H1 (cell line): ENCODE measurements at regions of chr7 and their contacts with region 1.

Region 1: DNA sequence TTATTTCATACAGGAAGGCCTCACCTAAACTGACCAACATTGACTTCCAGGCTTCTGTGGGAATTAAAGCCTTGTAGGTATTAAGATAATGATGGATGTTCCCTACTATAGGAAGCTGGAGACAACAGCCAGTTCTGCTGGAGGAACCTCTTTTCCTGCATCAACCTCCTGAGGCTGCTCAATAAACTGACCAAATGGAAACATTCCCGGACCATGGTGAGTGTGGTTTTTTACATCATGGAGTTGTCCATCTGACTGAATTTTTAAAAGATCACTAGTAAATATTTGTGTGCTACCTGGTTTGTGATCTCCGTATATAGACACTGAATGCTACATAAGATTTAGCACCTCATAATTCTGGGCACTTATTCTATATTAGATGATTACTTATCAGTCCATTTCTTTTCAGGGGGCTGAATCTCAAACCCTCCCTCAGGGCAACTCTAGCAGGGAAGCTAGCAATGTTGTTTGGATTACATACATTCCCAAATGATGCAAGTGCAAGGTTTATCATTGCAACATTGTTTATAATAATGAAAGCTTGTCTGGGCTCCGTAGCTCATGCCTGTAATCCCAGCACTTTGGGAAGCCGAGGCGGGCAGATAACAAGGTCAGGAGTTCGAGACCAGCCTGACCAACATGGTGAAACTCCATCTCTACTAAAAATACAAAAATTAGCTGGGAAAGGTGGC is 21.5 kb upstream of the SMKR1 start:
- DNase-seq: no peak
- H3K4me3 ChIP-seq: no peak overlapping the region
- H3K27ac ChIP-seq: no peak overlapping the region
- H3K4me1 ChIP-seq: no peaks in the 10 kb centered on the region
- H3K27me3 ChIP-seq: no peaks in the 10 kb centered on the region
- CTCF ChIP-seq: no peak
- EP300 ChIP-seq: no peak
- POLR2A ChIP-seq: no peak
- RAD21 ChIP-seq: no peak

Region 2: GRCh38 chr7:129468087-129468486 is 12.7 kb before region 1 on chr7:
- CTCF ChIA-PET with region 1: interaction called, 52 read pairs
- POLR2A ChIA-PET with region 1: no interaction called
- DNase-seq: no peak
- H3K4me3 ChIP-seq: no peak overlapping the region
- H3K27ac ChIP-seq: no peak overlapping the region
- H3K4me1 ChIP-seq: peaks cover 0 to 8% (median 6%) of the 10 kb centered on the region in 4 experiments; a peak in 4 of 7 replicates
- H3K27me3 ChIP-seq: no peaks in the 10 kb centered on the region
- CTCF ChIP-seq: no peak
- EP300 ChIP-seq: no peak
- POLR2A ChIP-seq: no peak
- RAD21 ChIP-seq: no peak